ENCODE measurements at regions of chr1 and their contacts with region 1.

Region 1: GRCh38 chr1:44002606-44003157 is 11.3 kb downstream of the CCDC24 start:
- DNase-seq: no peak
- H3K4me3 ChIP-seq: no peak overlapping the region
- H3K27ac ChIP-seq: no peak overlapping the region
- H3K4me1 ChIP-seq: peaks cover 0 to 9% (median 6%) of the 10 kb centered on the region in 4 donors
- H3K27me3 ChIP-seq: no peaks in the 10 kb centered on the region
- CTCF ChIP-seq: no peak
- EP300 ChIP-seq: no peak
- POLR2A ChIP-seq: no peak

Region 2: GRCh38 chr1:44036409-44037139 is 33.9 kb after region 1 on chr1:
- intact Hi-C with region 1: loop called (anchors 2 kb)
- DNase-seq: no peak
- H3K4me3 ChIP-seq: no peak overlapping the region
- H3K27ac ChIP-seq: peak overlapping the region; percentile 66 to 86 (median 78)
- H3K4me1 ChIP-seq: peaks cover 21 to 56% (median 42%) of the 10 kb centered on the region in 4 donors
- H3K27me3 ChIP-seq: no peaks in the 10 kb centered on the region
- CTCF ChIP-seq: peak; percentile 70 to 85 (median 85)
- EP300 ChIP-seq: no peak
- POLR2A ChIP-seq: no peak

Region 3: DNA sequence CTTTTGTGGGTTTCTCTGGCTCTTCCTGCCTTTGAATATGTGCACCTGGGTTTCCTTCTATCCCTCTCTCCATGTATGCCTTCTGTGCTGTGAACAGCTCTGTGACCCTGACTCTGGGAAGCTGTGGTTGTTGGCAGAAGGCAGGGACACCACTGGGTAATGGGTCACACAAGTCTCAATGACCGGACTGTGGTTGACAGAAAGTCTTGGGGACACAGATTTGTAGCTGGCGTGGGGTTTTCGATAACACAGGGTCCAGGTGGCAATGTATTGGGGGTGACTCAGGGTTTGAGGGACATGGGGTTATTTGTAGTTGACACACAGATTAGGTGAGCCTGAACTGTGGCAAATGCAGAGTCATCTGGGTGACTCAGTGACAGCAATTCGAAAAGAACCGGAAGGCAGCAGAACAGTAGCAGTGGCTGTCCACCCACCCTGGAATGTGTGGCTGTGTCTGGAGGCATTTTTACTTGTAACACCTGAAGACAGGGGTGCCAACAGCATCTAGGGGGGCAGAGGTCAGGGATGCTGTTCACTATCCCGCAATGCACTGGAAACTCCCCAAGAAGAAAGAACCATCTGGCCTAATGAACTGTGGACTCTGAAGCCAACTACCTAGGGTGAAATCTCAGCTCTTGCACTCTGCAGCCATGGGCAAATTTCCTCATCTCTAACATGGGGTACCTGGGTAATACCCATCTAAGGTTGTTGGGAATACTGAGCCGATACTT is 41.6 kb after region 1 on chr1:
- intact Hi-C with region 1: loop called (anchors 2 kb)
- DNase-seq: no peak
- H3K4me3 ChIP-seq: no peak overlapping the region
- H3K27ac ChIP-seq: no peak overlapping the region
- H3K4me1 ChIP-seq: peaks cover 0 to 21% (median 16%) of the 10 kb centered on the region in 4 donors
- H3K27me3 ChIP-seq: no peaks in the 10 kb centered on the region
- CTCF ChIP-seq: no peak
- EP300 ChIP-seq: no peak
- POLR2A ChIP-seq: no peak

Region 4: DNA sequence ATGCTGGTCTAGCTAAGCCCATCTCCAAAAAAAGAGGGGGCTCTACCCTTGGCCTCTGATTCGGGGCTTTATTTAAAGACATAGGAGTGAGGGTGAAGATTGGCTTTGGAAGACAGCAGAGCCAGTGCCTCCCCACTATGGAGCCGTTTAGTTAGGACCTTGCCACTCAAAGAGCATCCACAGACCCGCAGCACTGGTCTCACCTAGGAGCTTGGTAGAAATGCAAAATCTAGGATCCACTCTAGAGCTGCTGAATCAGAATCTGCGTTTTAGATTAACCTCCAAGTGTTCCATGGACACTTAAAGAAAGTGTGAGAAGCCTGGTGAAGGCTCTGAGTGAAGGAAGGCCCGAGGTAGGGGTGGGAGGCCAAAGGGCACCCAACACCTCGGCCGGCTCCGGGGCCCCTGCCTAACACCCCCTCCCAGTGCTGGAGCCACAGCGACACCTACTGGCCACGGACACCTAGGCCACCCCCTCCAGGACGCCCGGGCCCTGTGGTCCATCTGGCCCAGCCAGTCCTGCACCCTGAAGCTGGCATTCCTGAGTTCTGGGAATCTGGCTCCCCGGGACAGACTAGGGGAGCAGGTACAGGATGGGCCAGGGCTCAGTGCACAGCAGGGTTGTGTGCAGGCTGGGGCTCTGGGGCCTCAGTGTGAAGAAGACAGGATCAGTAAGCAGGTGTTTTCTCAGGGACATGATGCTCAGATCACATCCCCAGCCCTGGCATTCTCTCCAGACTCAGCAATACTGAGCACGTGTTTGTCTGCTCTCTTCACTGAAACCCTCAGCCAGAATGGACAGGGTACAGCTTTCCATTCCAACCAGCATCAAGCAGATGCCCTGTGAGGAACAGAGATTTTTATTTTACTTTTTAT is 592.4 kb after region 1 on chr1:
- intact Hi-C with region 1: loop called (anchors 10 kb)
- DNase-seq: peak; percentile 95
- H3K4me3 ChIP-seq: no peak overlapping the region
- H3K27ac ChIP-seq: no peak overlapping the region
- H3K4me1 ChIP-seq: peaks cover 0 to 4% (median 2%) of the 10 kb centered on the region in 4 donors
- H3K27me3 ChIP-seq: peaks cover 0 to 38% (median 0%) of the 10 kb centered on the region in 4 donors
- CTCF ChIP-seq: peak in 2 of 3 experiments; percentile 92 to 93
- EP300 ChIP-seq: no peak
- POLR2A ChIP-seq: no peak